ENCODE measurements at regions of chr2 and their contacts with region 1.

Region 1: GRCh38 chr2:12606472-12607000 is 110.2 kb upstream of the TRIB2 start:
- DNase-seq: no peak
- H3K4me3 Mint-ChIP-seq: no peak overlapping the region
- H3K27ac Mint-ChIP-seq: no peak overlapping the region
- H3K4me1 Mint-ChIP-seq: peaks cover 9% of the 10 kb centered on the region
- H3K27me3 Mint-ChIP-seq: no peaks in the 10 kb centered on the region
- CTCF ChIP-seq: peak; percentile 23

Region 2: DNA sequence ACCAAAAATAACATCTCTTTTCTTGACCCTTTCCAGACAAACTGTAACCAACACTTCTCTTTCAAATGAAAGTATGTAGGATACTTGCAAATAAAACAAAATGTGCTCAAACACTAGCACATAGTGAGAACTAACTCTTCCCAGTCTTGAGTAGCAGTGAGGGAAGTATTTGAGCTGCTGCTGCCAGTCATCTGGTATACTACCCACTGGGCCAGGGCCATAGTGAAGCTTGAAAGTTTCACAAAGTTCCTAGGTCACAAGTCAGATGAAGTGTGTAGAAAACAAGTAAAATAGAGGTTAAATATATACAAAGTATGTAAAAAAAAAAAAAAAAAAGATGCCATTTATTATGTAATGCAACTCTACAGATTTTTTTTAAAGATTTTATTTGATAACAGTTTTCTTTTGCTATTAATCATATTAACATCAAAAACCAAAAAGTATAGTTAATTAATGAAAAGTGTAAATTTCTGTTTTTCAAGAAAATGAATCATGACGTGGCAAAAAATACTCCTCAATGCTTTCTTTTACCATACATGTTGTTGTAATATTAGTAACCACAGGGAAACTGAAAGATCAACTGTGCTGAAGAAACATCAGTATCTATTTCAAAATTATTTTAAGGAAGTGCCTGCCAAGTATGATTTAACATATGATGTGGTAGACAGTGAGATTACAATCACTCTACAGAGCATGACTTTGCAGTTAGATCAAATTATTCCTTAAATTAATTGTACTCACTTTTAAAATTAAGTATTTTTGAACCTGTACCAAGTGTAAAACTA is 88.6 kb after region 1 on chr2:
- CTCF ChIA-PET with region 1: no interaction called
- intact Hi-C with region 1: loop called (anchors 5 kb)
- DNase-seq: no peak
- H3K4me3 Mint-ChIP-seq: no peak overlapping the region
- H3K27ac Mint-ChIP-seq: no peak overlapping the region
- H3K4me1 Mint-ChIP-seq: peaks cover 32% of the 10 kb centered on the region
- H3K27me3 Mint-ChIP-seq: no peaks in the 10 kb centered on the region
- CTCF ChIP-seq: no peak

Measured in Calu3 (cell line).